ENCODE measurements at regions of chr16 and their contacts with region 1.

Region 1: DNA sequence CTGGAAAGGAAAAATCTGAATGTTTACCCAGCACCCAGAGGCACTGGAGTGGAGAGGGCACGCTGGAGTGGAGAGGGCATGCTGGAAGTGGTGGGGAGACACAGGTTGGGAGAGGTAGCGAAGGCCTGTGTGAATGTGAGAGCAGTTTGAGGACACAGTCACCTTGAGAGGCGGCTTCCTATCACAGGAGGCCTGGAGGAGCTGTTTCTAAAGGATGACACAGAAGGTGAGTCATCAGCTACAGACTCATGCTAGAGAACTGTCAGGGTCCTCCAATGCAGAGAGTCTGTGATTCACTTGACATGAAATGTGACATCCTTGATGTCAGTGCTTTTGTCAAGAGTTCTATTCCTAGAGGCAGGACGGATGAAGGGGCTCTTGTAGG is 13.8 kb downstream of the CTRL start:
- DNase-seq: no peak
- CTCF ChIP-seq: no peak

Region 2: DNA sequence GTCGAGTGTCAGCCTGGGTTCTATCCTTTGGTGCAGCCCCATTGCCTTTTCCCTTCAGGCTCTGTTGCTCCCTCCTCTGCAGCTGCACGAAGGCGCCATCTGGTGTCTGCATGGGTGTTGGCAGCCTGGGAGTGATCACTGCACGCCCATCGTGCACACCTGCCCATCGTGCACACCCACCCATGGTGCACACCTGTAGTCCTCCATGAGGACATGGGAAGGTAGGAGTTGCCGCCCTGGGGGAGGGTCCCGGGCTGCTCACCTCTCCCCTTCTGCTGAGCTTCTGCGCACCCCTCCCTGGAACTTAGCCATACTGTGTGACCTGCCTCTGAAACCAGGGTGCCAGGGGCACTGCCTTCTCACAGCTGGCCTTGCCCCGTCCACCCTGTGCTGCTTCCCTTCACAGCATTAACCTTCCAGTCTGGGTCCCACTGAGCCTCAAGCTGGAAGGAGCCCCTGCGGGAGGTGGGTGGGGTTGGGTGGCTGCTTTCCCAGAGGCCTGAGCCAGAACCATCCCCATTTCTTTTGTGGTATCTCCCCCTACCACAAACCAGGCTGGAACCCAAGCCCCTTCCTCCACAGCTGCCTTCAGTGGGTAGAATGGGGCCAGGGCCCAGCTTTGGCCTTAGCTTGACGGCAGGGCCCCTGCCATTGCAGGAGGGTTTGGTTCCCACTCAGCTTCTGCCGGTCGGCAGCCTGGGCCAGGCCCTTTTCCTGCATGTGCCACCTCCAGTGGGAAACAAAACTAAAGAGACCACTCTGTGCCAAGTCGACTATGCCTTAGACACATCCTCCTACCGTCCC is 10.9 kb after region 1 on chr16:
- CTCF ChIA-PET with region 1: interaction called, 14 read pairs
- POLR2A ChIA-PET with region 1: no interaction called
- DNase-seq: peak; percentile 89
- CTCF ChIP-seq: peak; percentile 97

Region 3: DNA sequence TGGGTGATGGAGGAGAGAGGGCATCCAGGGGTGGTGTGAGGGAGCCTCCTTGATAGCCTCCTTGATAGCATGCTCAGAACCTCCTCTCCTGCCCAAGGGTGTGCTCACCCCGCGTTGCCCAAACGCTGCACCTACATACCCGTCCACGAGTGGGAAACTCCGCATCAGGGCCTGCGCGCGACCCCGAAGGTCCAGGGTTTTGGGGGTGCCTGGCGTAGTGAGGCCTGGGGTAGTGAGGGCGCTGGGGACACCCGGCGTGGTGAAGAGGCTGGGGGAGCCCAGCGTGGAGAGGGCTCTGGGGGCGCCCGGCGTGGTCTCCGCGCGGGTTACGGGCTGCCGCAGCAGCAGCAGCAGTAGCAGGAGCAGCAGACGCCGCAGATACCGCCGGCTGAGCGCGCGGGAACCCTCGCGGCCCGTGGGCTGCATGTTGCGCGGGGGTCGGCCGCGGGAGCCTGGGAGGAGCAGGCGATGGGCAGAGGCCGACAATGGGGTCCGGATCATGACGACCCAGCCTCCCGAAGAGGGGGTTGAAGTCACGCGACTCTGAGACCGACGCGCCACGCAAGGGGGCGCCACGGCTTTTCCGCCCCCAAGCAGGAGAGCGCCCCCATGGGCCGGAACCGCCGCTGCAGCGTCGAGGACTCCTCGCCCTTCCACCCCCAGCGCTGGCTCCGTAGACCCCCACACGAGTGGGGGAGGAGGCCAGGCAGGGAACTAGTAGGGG is 62.3 kb after region 1 on chr16 and contains the start of gene DPEP3:
- CTCF ChIA-PET with region 1: no interaction called
- POLR2A ChIA-PET with region 1: no interaction called
- DNase-seq: no peak
- CTCF ChIP-seq: peak; percentile 22

Region 4: GRCh38 chr16:68116256-68116867 is 198.5 kb after region 1 on chr16:
- CTCF ChIA-PET with region 1: no interaction called
- POLR2A ChIA-PET with region 1: no interaction called
- DNase-seq: peak; percentile 34
- CTCF ChIP-seq: no peak

Region 5: GRCh38 chr16:68369697-68370580 is 452.1 kb after region 1 on chr16:
- CTCF ChIA-PET with region 1: no interaction called
- POLR2A ChIA-PET with region 1: no interaction called
- DNase-seq: peak; percentile 84
- CTCF ChIP-seq: no peak

Measured in GM10248 (cell line).